ENCODE measurements at regions of chr1 and their contacts with region 1.

Region 1: GRCh38 chr1:155250633-155251449 is 4.4 kb downstream of the ENTREP3 start:
- DNase-seq: peak; percentile 90 to 94 (median 91)
- H3K4me3 ChIP-seq: peak overlapping the region in 1 of 2 donors; percentile 46
- H3K4me3 Mint-ChIP-seq: peak overlapping the region; percentile 35 to 81 (median 55)
- H3K27ac ChIP-seq: peak overlapping the region; percentile 20
- H3K27ac Mint-ChIP-seq: peak overlapping the region in 4 of 7 donors; percentile 54 to 92 (median 70)
- H3K4me1 ChIP-seq: peaks cover 21% of the 10 kb centered on the region
- H3K4me1 Mint-ChIP-seq: peaks cover 12 to 35% (median 20%) of the 10 kb centered on the region in 4 donors
- H3K27me3 ChIP-seq: no peaks in the 10 kb centered on the region
- H3K27me3 Mint-ChIP-seq: no peaks in the 10 kb centered on the region

Region 2: DNA sequence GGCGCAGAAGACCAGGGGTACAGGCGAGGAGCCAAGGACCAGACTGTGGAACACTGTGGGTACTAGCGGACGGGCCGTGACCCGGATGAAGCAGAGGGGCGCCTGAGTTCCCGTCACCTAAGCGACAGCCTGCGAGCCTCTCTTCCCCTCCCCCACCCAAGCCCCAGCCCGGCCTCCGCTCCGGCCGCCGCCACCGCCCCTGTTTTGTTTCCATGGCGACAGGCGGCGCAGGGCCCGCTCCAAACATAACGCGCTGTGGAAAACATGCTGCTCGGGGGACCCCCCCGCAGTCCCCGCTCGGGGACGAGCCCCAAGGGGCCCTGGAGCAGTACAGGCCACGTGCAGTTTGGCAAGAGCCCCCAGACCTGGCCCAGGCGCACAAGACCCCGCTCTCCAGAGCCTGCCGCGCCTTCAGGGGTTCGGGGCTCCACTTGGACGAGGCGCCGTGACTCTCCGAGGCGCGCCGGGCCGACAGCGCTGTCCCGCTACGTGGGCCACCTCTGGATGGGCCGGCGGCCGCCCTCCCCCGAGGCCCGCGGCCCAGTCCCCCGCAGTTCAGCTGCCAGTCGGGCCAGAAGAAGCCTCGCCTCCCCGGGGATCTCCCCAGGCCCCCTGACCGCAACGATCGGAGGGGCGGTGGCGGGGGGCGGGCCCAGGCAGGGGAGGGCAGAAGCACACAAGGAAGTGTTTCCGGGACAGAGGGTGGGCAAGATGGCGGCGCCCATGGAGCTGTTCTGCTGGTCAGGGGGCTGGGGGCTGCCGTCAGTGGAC is 42.1 kb before region 1 on chr1 and contains the start of gene MTX1:
- CTCF ChIA-PET with region 1: interaction called, 23 read pairs
- POLR2A ChIA-PET with region 1: interaction called, 28 read pairs
- intact Hi-C with region 1: no loop called
- DNase-seq: peak; percentile 90 to 96 (median 91)
- H3K4me3 ChIP-seq: peak within 1 kb of the TSS; percentile 68 to 100
- H3K4me3 Mint-ChIP-seq: peak within 1 kb of the TSS; percentile 86 to 92 (median 89)
- H3K27ac ChIP-seq: peak within 1 kb of the TSS; percentile 100
- H3K27ac Mint-ChIP-seq: peak within 1 kb of the TSS; percentile 95 to 98 (median 98)
- H3K4me1 ChIP-seq: peaks cover 29% of the 10 kb centered on the region
- H3K4me1 Mint-ChIP-seq: peaks cover 17 to 29% (median 24%) of the 10 kb centered on the region in 4 donors
- H3K27me3 ChIP-seq: no peaks in the 10 kb centered on the region
- H3K27me3 Mint-ChIP-seq: no peaks in the 10 kb centered on the region
- total RNA-seq, gene MTX1: 17.7 to 18.2 TPM

Region 3: DNA sequence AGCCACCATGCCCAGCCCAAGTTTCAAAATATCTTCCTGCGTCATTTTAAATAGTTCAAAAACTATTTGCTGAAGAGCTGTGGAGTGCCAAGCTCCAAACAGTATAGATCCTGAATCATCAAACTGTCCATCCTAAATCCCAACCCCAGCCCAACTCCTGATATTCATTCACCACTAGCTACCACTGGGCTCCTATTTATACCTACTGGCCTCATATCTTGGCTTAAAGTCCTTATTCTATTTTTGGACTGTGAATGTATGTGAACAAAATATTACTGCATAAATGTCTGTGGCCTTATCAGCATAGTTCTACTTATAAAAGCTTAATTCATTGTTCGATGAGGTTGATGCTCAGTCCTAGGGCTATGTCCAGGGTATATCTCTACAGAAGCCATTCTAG is 16.5 kb after region 1 on chr1:
- CTCF ChIA-PET with region 1: interaction called, 77 read pairs
- POLR2A ChIA-PET with region 1: interaction called, 59 read pairs
- intact Hi-C with region 1: no loop called
- DNase-seq: no peak
- H3K4me3 ChIP-seq: no peak overlapping the region
- H3K4me3 Mint-ChIP-seq: no peak overlapping the region
- H3K27ac ChIP-seq: no peak overlapping the region
- H3K27ac Mint-ChIP-seq: no peak overlapping the region
- H3K4me1 ChIP-seq: peaks cover 15% of the 10 kb centered on the region
- H3K4me1 Mint-ChIP-seq: peaks cover 12 to 31% (median 19%) of the 10 kb centered on the region in 4 donors
- H3K27me3 ChIP-seq: no peaks in the 10 kb centered on the region
- H3K27me3 Mint-ChIP-seq: no peaks in the 10 kb centered on the region

Region 4: GRCh38 chr1:155323798-155324610 is 73.2 kb after region 1 on chr1:
- CTCF ChIA-PET with region 1: interaction called, 143 read pairs
- POLR2A ChIA-PET with region 1: interaction called, 28 read pairs
- intact Hi-C with region 1: loop called (anchors 1 kb)
- DNase-seq: peak; percentile 83 to 93 (median 85)
- H3K4me3 ChIP-seq: peak overlapping the region; percentile 91 to 96
- H3K4me3 Mint-ChIP-seq: peak overlapping the region; percentile 70 to 91 (median 88)
- H3K27ac ChIP-seq: peak overlapping the region; percentile 96
- H3K27ac Mint-ChIP-seq: peak overlapping the region; percentile 82 to 93 (median 90)
- H3K4me1 ChIP-seq: peaks cover 31% of the 10 kb centered on the region
- H3K4me1 Mint-ChIP-seq: peaks cover 14 to 46% (median 29%) of the 10 kb centered on the region in 4 donors
- H3K27me3 ChIP-seq: no peaks in the 10 kb centered on the region
- H3K27me3 Mint-ChIP-seq: no peaks in the 10 kb centered on the region

Region 5: DNA sequence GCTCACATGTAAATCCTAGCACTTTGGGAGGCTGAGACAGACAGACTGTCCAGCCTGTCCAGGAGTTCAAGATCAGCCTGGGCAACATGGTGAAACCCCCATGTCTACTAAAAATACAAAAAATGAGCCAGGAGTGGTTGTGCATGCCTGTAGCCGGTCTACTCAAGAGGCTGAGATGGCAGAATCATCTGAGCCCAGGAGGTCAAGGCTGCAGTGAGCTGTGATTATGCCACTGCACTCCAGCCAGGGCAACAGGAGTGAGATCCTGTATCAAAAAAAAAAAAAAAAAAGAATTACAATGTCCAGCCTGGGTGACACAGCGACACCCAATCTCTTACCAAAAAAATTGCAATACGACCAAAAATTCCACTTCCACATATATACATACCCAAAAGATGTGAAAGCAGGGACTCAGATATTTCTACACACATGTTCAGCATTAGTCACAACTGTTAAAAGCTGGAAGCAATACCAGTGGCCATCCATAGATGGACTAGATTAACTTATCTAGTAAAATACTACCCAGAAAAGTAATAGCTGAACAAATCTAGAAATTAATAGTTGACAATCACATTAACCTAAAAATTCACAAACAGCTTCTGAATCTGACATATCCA is 262.6 kb after region 1 on chr1:
- CTCF ChIA-PET with region 1: no interaction called
- POLR2A ChIA-PET with region 1: no interaction called
- intact Hi-C with region 1: no loop called
- DNase-seq: no peak
- H3K4me3 ChIP-seq: no peak overlapping the region
- H3K4me3 Mint-ChIP-seq: no peak overlapping the region
- H3K27ac ChIP-seq: no peak overlapping the region
- H3K27ac Mint-ChIP-seq: peak overlapping the region in 4 of 7 donors; percentile 3 to 79 (median 30)
- H3K4me1 ChIP-seq: peaks cover 39% of the 10 kb centered on the region
- H3K4me1 Mint-ChIP-seq: peaks cover 38 to 66% (median 52%) of the 10 kb centered on the region in 4 donors
- H3K27me3 ChIP-seq: no peaks in the 10 kb centered on the region
- H3K27me3 Mint-ChIP-seq: no peaks in the 10 kb centered on the region

Region 6: GRCh38 chr1:155591770-155592169 is 340.9 kb after region 1 on chr1:
- CTCF ChIA-PET with region 1: interaction called, 90 read pairs
- POLR2A ChIA-PET with region 1: interaction called, 3 read pairs
- intact Hi-C with region 1: loop called (anchors 1 kb)
- DNase-seq: peak in 4 of 5 donors; percentile 59 to 68 (median 62)
- H3K4me3 ChIP-seq: no peak overlapping the region
- H3K4me3 Mint-ChIP-seq: no peak overlapping the region
- H3K27ac ChIP-seq: no peak overlapping the region
- H3K27ac Mint-ChIP-seq: no peak overlapping the region
- H3K4me1 ChIP-seq: no peaks in the 10 kb centered on the region
- H3K4me1 Mint-ChIP-seq: peaks cover 0 to 3% (median 3%) of the 10 kb centered on the region in 4 donors
- H3K27me3 ChIP-seq: no peaks in the 10 kb centered on the region
- H3K27me3 Mint-ChIP-seq: no peaks in the 10 kb centered on the region